ENCODE measurements at regions of chr13 and their contacts with region 1.

Region 1: GRCh38 chr13:50531917-50532899 is 311.3 kb downstream of the DLEU7 start:
- DNase-seq: peak in 1 of 2 donors; percentile 44
- ATAC-seq: no peak
- H3K4me3 ChIP-seq: no peak overlapping the region
- H3K4me3 Mint-ChIP-seq: no peak overlapping the region
- H3K27ac ChIP-seq: no peak overlapping the region
- H3K27ac Mint-ChIP-seq: no peak overlapping the region
- H3K4me1 ChIP-seq: peaks cover 6% of the 10 kb centered on the region
- H3K4me1 Mint-ChIP-seq: no peaks in the 10 kb centered on the region
- H3K27me3 ChIP-seq: no peaks in the 10 kb centered on the region
- H3K27me3 Mint-ChIP-seq: peaks cover 0 to 14% of the 10 kb centered on the region in 2 donors
- CTCF ChIP-seq: peak; percentile 67

Region 2: DNA sequence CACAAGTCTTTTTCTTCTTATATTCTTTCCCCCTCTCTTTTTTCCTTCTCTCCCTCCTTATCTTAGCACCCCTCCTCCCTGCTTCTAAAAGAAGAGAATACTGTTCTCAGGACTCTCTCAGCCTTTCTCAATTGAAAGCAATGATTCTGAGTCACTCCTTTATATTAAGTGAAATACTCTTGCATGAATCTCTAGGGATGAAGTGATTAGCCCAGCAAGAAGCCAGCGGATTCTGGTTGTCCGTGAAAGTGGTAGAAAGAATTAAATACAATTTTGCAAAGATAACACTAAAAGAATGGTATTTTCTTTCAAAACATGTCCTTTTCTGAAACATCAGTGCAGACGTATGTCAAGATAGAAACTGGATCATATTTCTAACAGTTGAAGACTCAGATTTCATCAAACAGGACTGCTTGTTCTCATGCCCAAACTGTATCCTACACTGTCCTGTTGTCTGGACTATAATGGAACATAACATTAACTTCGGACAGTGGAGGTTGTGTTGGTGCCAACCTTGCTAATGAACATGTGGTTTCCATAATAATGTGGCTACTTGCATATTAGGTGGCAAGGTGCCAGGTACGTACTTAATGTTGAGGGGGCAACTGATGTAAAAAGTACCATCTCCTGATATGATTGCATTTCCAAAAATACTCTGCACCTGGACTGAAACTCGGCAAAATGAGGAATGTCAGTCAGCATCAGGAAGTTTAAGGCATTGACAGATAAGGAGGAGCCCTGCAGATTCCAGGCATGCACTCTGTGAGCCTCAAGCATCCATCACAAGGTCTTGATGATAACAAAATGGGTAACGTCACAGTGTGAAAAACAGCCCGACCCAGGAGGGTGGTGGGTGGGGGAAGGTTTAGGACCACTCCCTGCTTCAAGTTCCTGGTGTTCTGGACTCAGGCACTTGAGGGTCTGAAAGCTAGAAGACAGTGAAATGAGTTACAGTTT is 46.0 kb before region 1 on chr13:
- intact Hi-C with region 1: no loop called
- DNase-seq: no peak
- ATAC-seq: no peak
- H3K4me3 ChIP-seq: no peak overlapping the region
- H3K4me3 Mint-ChIP-seq: no peak overlapping the region
- H3K27ac ChIP-seq: no peak overlapping the region
- H3K27ac Mint-ChIP-seq: no peak overlapping the region
- H3K4me1 ChIP-seq: no peaks in the 10 kb centered on the region
- H3K4me1 Mint-ChIP-seq: no peaks in the 10 kb centered on the region
- H3K27me3 ChIP-seq: no peaks in the 10 kb centered on the region
- H3K27me3 Mint-ChIP-seq: peaks cover 0 to 7% of the 10 kb centered on the region in 2 donors
- CTCF ChIP-seq: no peak

Region 3: GRCh38 chr13:50580684-50581305 is 48.6 kb after region 1 on chr13:
- intact Hi-C with region 1: no loop called
- DNase-seq: no peak
- ATAC-seq: no peak
- H3K4me3 ChIP-seq: no peak overlapping the region
- H3K4me3 Mint-ChIP-seq: no peak overlapping the region
- H3K27ac ChIP-seq: no peak overlapping the region
- H3K27ac Mint-ChIP-seq: no peak overlapping the region
- H3K4me1 ChIP-seq: no peaks in the 10 kb centered on the region
- H3K4me1 Mint-ChIP-seq: no peaks in the 10 kb centered on the region
- H3K27me3 ChIP-seq: no peaks in the 10 kb centered on the region
- H3K27me3 Mint-ChIP-seq: no peaks in the 10 kb centered on the region
- CTCF ChIP-seq: no peak

Region 4: DNA sequence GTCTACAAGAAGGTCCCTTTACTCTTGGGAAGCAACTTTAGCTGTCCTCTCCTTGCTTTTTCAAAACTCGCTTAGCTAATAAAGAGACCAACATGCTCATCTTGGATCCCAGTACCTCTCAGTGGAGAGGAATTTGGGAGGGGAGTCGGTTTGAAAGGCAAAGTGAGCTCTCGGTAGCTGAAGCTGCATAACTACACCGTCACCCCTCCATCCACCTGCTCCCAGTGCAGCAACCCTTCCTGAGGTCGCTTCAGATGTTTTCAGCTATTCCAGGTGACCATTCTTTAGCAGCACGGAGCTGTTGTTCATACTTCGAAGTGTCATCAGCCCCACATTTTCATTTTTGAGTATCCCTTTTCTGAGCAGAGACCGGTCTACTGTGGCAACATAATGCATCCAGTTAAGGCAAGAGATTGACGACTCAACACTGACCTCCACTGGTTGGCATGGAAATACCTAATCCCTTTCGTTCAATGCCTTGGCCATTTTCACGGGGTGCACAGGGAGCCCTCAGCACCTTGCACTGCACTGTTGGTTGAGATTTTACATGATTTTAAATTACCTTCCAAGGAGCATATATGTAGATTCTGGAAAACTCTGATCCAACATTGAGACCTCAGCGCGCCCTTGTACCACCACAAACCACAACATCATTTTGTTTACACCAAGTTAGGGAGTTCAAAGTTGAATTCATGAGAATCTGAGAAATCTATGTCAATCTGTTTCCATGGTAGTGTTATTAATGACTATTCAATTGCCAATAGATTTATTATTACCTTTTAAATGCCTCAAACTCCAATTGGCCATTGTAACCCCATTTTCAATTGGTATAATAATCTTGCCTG is 269.1 kb after region 1 on chr13:
- intact Hi-C with region 1: loop called (anchors 1 kb)
- DNase-seq: peak; percentile 36 to 86
- ATAC-seq: peak; percentile 91 to 98 (median 97)
- H3K4me3 ChIP-seq: no peak overlapping the region
- H3K4me3 Mint-ChIP-seq: no peak overlapping the region
- H3K27ac ChIP-seq: peak overlapping the region; percentile 4
- H3K27ac Mint-ChIP-seq: no peak overlapping the region
- H3K4me1 ChIP-seq: peaks cover 7% of the 10 kb centered on the region
- H3K4me1 Mint-ChIP-seq: peaks cover 0 to 6% of the 10 kb centered on the region in 2 donors
- H3K27me3 ChIP-seq: no peaks in the 10 kb centered on the region
- H3K27me3 Mint-ChIP-seq: peaks cover 7 to 9% of the 10 kb centered on the region in 2 donors
- CTCF ChIP-seq: peak; percentile 80

Region 5: DNA sequence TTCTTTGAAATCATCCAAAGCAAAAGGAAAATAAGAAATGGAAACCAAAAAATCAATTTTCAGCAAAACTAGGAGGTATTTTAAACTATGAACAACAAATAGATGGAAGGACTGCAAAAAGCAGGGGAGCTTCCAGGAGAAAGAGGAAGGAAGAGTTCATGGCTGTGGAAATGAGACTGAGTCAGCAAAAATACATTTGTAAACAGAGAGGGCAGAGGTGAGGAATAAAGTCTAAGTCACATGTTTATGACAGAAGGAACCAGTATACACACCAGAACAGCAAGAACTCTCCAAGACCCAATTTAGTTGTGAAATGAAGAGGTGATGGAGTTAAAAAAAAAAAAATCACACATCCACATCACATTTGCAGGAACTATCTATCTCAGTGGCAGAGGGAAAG is 447.0 kb after region 1 on chr13:
- intact Hi-C with region 1: no loop called
- DNase-seq: no peak
- ATAC-seq: no peak
- H3K4me3 ChIP-seq: no peak overlapping the region
- H3K4me3 Mint-ChIP-seq: no peak overlapping the region
- H3K27ac ChIP-seq: no peak overlapping the region
- H3K27ac Mint-ChIP-seq: no peak overlapping the region
- H3K4me1 ChIP-seq: no peaks in the 10 kb centered on the region
- H3K4me1 Mint-ChIP-seq: peaks cover 0 to 8% of the 10 kb centered on the region in 2 donors
- H3K27me3 ChIP-seq: no peaks in the 10 kb centered on the region
- H3K27me3 Mint-ChIP-seq: no peaks in the 10 kb centered on the region
- CTCF ChIP-seq: no peak